ENCODE measurements at regions of chr17 and their contacts with region 1.

Region 1: GRCh38 chr17:68035523-68036303 is at the start of gene KPNA2:
- DNase-seq: peak; percentile 77 to 97 (median 87)
- ATAC-seq: peak; percentile 83
- H3K4me3 ChIP-seq: peak within 1 kb of the TSS; percentile 90
- H3K4me3 Mint-ChIP-seq: peak within 1 kb of the TSS; percentile 98
- H3K27ac ChIP-seq: peak within 1 kb of the TSS; percentile 75 to 79
- H3K27ac Mint-ChIP-seq: peak within 1 kb of the TSS; percentile 93
- H3K4me1 ChIP-seq: peaks cover 7% of the 10 kb centered on the region
- H3K4me1 Mint-ChIP-seq: peaks cover 17% of the 10 kb centered on the region
- H3K27me3 ChIP-seq: no peaks in the 10 kb centered on the region
- H3K27me3 Mint-ChIP-seq: no peaks in the 10 kb centered on the region
- CTCF ChIP-seq: no peak
- total RNA-seq, gene KPNA2: 64.4 to 65.9 TPM

Region 2: GRCh38 chr17:67717624-67718329 is 317.9 kb before region 1 on chr17 and contains the start of gene NOL11:
- CTCF ChIA-PET with region 1: no interaction called
- POLR2A ChIA-PET with region 1: no interaction called
- intact Hi-C with region 1: loop called in 1 of 2 experiments (anchors 5 kb)
- DNase-seq: peak; percentile 99 to 100 (median 99)
- ATAC-seq: peak; percentile 91
- H3K4me3 ChIP-seq: peak within 1 kb of the TSS; percentile 81
- H3K4me3 Mint-ChIP-seq: peak within 1 kb of the TSS; percentile 97
- H3K27ac ChIP-seq: peak within 1 kb of the TSS; percentile 91 to 95
- H3K27ac Mint-ChIP-seq: peak within 1 kb of the TSS; percentile 95
- H3K4me1 ChIP-seq: peaks cover 20% of the 10 kb centered on the region
- H3K4me1 Mint-ChIP-seq: peaks cover 30% of the 10 kb centered on the region
- H3K27me3 ChIP-seq: no peaks in the 10 kb centered on the region
- H3K27me3 Mint-ChIP-seq: no peaks in the 10 kb centered on the region
- CTCF ChIP-seq: peak; percentile 83
- total RNA-seq, gene NOL11: 89.1 to 91.2 TPM

Region 3: GRCh38 chr17:67993596-67994361 is 41.9 kb before region 1 on chr17:
- CTCF ChIA-PET with region 1: no interaction called
- POLR2A ChIA-PET with region 1: interaction called, 3 read pairs
- intact Hi-C with region 1: loop called in 1 of 2 experiments (anchors 5 kb)
- DNase-seq: peak in 10 of 14 experiments; percentile 2 to 89 (median 60)
- ATAC-seq: peak; percentile 53
- H3K4me3 ChIP-seq: peak overlapping the region; percentile 69
- H3K4me3 Mint-ChIP-seq: peak overlapping the region; percentile 86
- H3K27ac ChIP-seq: no peak overlapping the region
- H3K27ac Mint-ChIP-seq: peak overlapping the region; percentile 75
- H3K4me1 ChIP-seq: peaks cover 39% of the 10 kb centered on the region
- H3K4me1 Mint-ChIP-seq: peaks cover 32% of the 10 kb centered on the region
- H3K27me3 ChIP-seq: peaks cover 6 to 14% of the 10 kb centered on the region in 2 experiments
- H3K27me3 Mint-ChIP-seq: peaks cover 19% of the 10 kb centered on the region
- CTCF ChIP-seq: no peak

Region 4: DNA sequence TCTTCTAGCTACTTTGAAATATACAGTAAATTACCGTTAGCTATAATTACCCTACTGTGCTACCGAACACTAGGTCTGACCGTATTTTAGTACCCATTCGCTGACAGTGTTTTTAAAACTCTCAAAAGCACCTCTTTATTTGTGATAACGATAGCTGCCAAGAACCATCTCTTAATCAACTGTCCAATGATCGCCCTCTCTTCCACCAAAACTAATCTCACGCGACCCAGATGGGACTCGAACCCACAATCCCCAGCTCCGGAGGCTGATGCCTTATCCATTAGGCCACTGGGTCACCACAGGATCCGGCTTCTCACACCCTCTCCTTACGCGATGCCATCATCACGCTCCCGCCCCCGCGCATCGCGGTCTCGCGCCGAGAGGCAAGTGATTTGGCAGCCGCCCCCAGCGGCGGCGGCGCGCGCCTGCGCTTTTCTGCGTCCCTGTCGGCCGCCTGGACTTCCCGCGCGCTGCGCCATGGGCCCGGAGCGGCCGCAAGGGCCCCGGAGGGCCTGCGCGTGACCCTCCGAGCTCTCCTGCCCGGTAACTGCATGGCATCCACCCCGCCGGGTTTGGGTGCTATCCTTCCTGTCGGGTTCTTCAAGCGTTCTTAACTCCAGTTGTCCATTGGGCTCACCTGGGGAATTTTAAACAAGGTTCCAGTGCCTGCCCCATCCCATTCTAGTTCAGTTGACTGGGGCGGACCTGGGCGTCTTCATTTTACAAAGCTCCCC is 15.9 kb before region 1 on chr17:
- CTCF ChIA-PET with region 1: interaction called, 5 read pairs
- POLR2A ChIA-PET with region 1: interaction called, 16 read pairs
- intact Hi-C with region 1: loop called (anchors 1 to 2 kb)
- DNase-seq: peak; percentile 91 to 99 (median 96)
- ATAC-seq: peak; percentile 93
- H3K4me3 ChIP-seq: peak overlapping the region; percentile 74
- H3K4me3 Mint-ChIP-seq: peak overlapping the region; percentile 87
- H3K27ac ChIP-seq: peak overlapping the region in 1 of 2 donors; percentile 55
- H3K27ac Mint-ChIP-seq: peak overlapping the region; percentile 92
- H3K4me1 ChIP-seq: peaks cover 14% of the 10 kb centered on the region
- H3K4me1 Mint-ChIP-seq: peaks cover 21% of the 10 kb centered on the region
- H3K27me3 ChIP-seq: no peaks in the 10 kb centered on the region
- H3K27me3 Mint-ChIP-seq: peaks cover 9% of the 10 kb centered on the region
- CTCF ChIP-seq: peak; percentile 44

Region 5: DNA sequence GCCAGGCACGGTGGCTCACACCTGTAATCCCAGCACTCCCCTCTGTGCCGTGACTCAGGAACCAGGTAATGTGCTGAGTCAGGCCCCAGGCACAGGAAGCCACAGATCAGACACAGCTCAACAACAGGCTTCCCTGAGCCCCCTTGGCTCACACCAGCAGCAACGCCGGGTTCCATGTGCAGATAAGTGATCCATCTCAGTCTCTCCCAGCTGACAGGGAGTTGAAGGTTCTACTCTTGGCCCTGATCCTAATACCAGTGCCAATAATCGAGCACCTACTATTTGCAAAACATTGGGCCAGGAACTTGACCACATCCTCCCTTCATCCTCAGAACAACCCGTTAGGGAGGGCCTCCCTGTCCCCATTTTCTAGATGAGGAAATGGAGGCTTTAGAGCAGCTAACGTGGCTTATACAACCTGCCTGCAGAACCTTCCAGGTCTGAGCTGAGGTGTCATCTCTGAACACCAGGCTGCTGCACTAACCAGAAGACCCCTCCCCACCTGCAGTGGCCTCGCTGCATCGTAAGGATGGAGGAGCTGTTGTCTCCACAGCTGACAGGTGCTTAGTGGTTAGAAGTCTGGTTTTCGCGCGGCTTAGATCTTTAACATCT is 147.3 kb after region 1 on chr17:
- CTCF ChIA-PET with region 1: no interaction called
- POLR2A ChIA-PET with region 1: no interaction called
- intact Hi-C with region 1: no loop called
- DNase-seq: peak; percentile 54 to 91 (median 70)
- ATAC-seq: peak; percentile 78
- H3K4me3 ChIP-seq: peak overlapping the region; percentile 65
- H3K4me3 Mint-ChIP-seq: peak overlapping the region; percentile 84
- H3K27ac ChIP-seq: peak overlapping the region; percentile 65 to 76
- H3K27ac Mint-ChIP-seq: peak overlapping the region; percentile 83
- H3K4me1 ChIP-seq: peaks cover 62% of the 10 kb centered on the region
- H3K4me1 Mint-ChIP-seq: peaks cover 60% of the 10 kb centered on the region
- H3K27me3 ChIP-seq: no peaks in the 10 kb centered on the region
- H3K27me3 Mint-ChIP-seq: no peaks in the 10 kb centered on the region
- CTCF ChIP-seq: no peak

Region 6: DNA sequence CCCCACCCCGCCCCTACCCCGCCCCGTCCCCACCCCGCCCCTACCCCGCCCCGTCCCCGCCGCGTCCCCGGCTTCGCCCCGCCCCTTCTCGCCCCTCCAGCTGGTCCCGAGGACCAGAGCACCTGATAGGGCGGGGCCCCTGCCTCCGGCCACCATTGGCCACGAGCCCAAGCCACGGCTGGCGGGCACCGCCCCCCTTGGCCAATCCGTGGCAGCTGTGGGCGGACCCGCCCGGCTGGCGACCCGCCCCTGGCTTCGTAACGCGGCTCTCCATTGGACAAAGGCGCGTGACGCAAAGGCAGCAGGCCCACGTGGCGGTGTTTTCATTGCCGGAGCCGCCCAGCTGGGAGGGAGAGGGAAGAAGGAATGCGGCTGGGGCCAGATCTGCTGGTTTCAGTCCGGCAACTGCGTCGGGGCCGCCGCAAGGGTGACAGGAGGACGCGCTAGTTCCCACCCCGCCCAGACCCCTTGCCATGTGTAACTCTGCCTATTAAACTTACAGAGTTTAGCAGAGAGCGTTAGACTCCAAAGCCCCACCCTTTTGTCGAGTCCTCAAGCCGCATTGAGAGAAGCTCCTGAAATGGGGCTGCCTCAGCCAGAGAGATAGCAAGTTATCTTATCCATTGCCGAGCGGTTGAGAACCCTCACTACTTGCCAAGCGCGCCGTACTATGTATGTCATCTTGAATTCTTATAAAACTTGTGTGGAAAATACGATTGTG is 422.0 kb after region 1 on chr17:
- CTCF ChIA-PET with region 1: no interaction called
- POLR2A ChIA-PET with region 1: interaction called, 7 read pairs
- intact Hi-C with region 1: loop called (anchors 5 kb)
- DNase-seq: peak; percentile 95 to 99 (median 98)
- ATAC-seq: peak; percentile 93
- H3K4me3 ChIP-seq: peak overlapping the region; percentile 77
- H3K4me3 Mint-ChIP-seq: peak overlapping the region; percentile 82
- H3K27ac ChIP-seq: peak overlapping the region; percentile 43 to 59
- H3K27ac Mint-ChIP-seq: peak overlapping the region; percentile 81
- H3K4me1 ChIP-seq: peaks cover 50% of the 10 kb centered on the region
- H3K4me1 Mint-ChIP-seq: peaks cover 51% of the 10 kb centered on the region
- H3K27me3 ChIP-seq: no peaks in the 10 kb centered on the region
- H3K27me3 Mint-ChIP-seq: no peaks in the 10 kb centered on the region
- CTCF ChIP-seq: no peak

Region 7: DNA sequence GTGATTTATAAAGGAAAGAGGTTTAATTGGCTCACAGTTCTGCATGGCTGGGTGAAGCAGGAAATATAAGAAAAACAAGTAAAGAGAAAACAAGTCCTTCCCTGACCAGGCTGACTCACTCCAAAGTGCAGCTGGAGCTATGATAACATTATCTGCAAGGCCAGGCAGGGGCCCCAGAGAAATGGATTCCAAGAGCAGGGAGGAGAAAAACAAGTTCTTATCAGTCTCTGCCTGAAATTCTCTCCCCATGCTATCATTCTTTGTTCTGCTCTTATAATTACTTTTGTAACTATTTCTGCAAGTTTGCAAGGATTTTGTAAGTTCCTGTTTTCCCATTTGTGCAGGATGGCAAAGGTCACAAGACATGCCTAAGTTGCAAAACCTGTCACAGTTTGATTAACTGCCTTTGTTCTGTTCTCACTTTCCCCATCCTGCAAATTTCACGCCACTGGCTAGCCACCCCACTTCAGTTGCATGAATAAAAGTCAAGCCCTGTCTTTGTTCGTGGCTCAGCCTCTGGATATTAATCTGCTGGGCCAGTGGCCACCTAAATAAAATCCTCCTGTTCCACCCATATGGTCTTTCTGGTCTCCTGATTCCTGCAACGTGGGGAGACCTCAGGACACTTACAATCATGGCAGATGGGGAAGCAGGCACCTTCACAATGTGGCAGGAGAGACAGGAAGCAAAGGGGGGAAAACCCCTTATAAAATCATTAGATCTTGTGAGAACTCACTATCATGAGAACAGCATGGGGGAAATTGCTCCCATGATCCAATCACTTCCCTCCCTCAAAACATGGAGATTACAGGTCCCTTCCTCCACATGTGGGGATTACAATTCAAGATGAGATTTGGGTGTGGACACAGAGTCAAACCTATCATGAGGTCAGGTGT is 1011.9 kb after region 1 on chr17:
- CTCF ChIA-PET with region 1: no interaction called
- POLR2A ChIA-PET with region 1: no interaction called
- intact Hi-C with region 1: no loop called
- DNase-seq: peak in 1 of 14 experiments; percentile 5
- ATAC-seq: no peak
- H3K4me3 ChIP-seq: no peak overlapping the region
- H3K4me3 Mint-ChIP-seq: no peak overlapping the region
- H3K27ac ChIP-seq: no peak overlapping the region
- H3K27ac Mint-ChIP-seq: no peak overlapping the region
- H3K4me1 ChIP-seq: no peaks in the 10 kb centered on the region
- H3K4me1 Mint-ChIP-seq: peaks cover 4% of the 10 kb centered on the region
- H3K27me3 ChIP-seq: no peaks in the 10 kb centered on the region
- H3K27me3 Mint-ChIP-seq: peaks cover 11% of the 10 kb centered on the region
- CTCF ChIP-seq: no peak